Activated naive CD4-positive, alpha-beta T cell treated with anti-CD3 and anti-CD28 coated beads for 36 hours (primary cell): ENCODE measurements at regions of chr17 and their contacts with region 1.

Region 1: GRCh38 chr17:2253768-2254406 is 49.7 kb downstream of the SMG6 start:
- DNase-seq: peak; percentile 70
- H3K4me3 Mint-ChIP-seq: peak overlapping the region; percentile 43
- H3K27ac Mint-ChIP-seq: peak overlapping the region; percentile 91
- H3K4me1 Mint-ChIP-seq: peaks cover 65% of the 10 kb centered on the region
- H3K27me3 Mint-ChIP-seq: no peaks in the 10 kb centered on the region

Region 2: DNA sequence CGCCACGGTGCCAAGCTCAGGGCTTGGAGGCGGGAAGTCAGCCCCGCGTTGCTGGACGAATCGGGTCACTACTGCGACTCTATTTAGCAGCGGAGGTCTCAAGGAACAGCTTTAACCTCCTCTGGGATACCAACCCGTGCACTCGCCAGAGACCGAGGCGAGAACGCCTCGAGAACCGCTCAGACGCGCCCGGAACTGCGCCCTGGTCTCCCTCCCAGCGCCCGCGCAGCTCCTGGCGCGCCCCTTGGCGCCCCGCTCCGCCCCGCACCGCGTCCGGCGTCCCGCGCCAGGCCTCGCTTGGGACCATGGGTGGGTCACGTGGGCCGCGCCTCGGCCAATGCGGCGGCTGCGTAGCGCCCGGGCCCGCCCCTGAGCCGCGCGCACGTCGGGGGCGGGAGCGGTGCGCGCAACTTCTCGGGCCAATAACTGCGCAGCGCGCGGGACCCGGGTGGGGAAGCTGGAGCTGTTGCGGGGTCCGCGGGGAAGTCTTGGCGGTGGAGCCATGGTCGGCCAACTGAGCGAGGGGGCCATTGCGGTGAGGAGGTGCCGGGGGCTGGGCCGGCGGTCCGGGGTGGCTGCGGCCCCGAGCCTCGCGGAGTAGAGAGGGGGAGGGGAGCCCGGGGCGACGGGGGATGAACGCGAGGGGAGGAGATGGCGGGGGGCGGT is 424.2 kb before region 1 on chr17 and contains the starts of genes RPA1 and SMYD4:
- CTCF ChIA-PET with region 1: no interaction called
- intact Hi-C with region 1: loop called (anchors 5 kb)
- DNase-seq: peak; percentile 89
- H3K4me3 Mint-ChIP-seq: peak within 1 kb of the TSS; percentile 93
- H3K27ac Mint-ChIP-seq: peak within 1 kb of the TSS; percentile 85
- H3K4me1 Mint-ChIP-seq: peaks cover 61% of the 10 kb centered on the region
- H3K27me3 Mint-ChIP-seq: no peaks in the 10 kb centered on the region
- total RNA-seq, gene RPA1: 177 to 188 TPM
- total RNA-seq, gene SMYD4: 18.7 to 22.0 TPM

Region 3: GRCh38 chr17:2215616-2216364 is 38.1 kb before region 1 on chr17:
- CTCF ChIA-PET with region 1: no interaction called
- intact Hi-C with region 1: loop called (anchors 5 kb)
- DNase-seq: peak; percentile 86
- H3K4me3 Mint-ChIP-seq: peak overlapping the region; percentile 78
- H3K27ac Mint-ChIP-seq: peak overlapping the region; percentile 94
- H3K4me1 Mint-ChIP-seq: peaks cover 52% of the 10 kb centered on the region
- H3K27me3 Mint-ChIP-seq: no peaks in the 10 kb centered on the region

Region 4: DNA sequence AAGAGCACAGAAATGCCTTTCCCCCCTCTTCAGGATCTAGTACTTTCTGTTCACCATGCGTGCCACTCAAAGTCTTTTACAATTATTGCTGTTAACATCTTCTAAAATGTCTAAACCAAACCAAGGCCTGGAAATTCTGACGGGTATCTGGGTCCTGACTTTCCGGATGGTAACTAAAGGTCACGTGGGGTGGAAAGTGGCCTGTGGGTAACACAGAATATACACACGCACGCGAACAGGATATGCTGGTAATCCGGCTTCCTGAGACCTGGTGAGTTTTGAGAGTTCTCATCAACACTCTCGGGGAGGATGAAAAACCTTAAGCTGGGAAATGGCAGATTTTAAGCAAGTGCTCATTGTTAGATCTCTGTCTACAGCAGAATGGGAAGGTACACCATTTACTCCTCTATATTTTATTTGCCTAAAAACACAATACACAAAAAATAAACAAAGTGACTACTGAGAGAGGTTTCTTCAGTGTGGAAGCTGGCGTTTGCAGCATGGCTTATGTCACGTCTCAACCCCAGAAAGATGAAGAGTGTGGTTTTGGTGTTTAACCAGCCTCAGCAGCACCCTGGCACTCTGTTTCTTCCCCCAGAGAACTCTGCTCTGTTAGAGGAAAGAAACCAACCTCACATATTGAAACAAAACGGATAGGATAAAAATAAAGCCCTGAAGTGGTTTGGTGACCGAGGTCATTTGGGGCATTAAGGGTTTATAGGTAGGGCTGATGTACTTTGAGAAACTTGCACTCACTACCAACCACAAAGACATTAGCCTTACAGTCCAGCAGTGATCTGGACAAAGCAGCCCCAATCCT is 12.4 kb after region 1 on chr17:
- CTCF ChIA-PET with region 1: interaction called, 11 read pairs
- intact Hi-C with region 1: loop called (anchors 1 kb)
- DNase-seq: peak; percentile 94
- H3K4me3 Mint-ChIP-seq: peak overlapping the region; percentile 76
- H3K27ac Mint-ChIP-seq: peak overlapping the region; percentile 100
- H3K4me1 Mint-ChIP-seq: peaks cover 88% of the 10 kb centered on the region
- H3K27me3 Mint-ChIP-seq: no peaks in the 10 kb centered on the region

Region 5: GRCh38 chr17:2271985-2272702 is 18.3 kb after region 1 on chr17:
- CTCF ChIA-PET with region 1: interaction called, 11 read pairs
- intact Hi-C with region 1: loop called (anchors 2 kb)
- DNase-seq: peak; percentile 52
- H3K4me3 Mint-ChIP-seq: peak overlapping the region; percentile 32
- H3K27ac Mint-ChIP-seq: peak overlapping the region; percentile 94
- H3K4me1 Mint-ChIP-seq: peaks cover 68% of the 10 kb centered on the region
- H3K27me3 Mint-ChIP-seq: no peaks in the 10 kb centered on the region

Region 6: GRCh38 chr17:2282297-2282873 is 28.5 kb after region 1 on chr17:
- CTCF ChIA-PET with region 1: interaction called, 8 read pairs
- intact Hi-C with region 1: loop called (anchors 1 kb)
- DNase-seq: no peak
- H3K4me3 Mint-ChIP-seq: no peak overlapping the region
- H3K27ac Mint-ChIP-seq: peak overlapping the region; percentile 38
- H3K4me1 Mint-ChIP-seq: peaks cover 29% of the 10 kb centered on the region
- H3K27me3 Mint-ChIP-seq: no peaks in the 10 kb centered on the region

Region 7: DNA sequence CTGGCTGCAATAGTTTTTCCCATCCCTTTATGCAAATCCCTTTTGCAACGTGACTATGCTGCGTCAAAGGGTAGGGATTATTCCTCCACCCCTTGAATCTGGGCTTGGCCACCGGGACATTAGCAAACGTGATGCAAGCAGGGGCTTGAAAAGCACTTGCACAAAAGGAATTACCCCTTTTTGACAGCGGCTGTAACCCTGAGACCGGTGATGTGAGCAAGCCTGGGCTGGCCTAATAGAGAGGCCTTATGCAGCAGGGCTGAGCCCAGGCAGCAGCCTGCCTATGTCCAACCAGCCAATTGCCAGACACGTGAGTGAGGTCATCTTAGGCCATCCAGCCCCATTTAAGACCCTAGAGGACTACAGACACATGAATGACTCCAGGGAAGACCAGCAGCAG is 309.2 kb after region 1 on chr17:
- CTCF ChIA-PET with region 1: no interaction called
- intact Hi-C with region 1: no loop called
- DNase-seq: no peak
- H3K4me3 Mint-ChIP-seq: no peak overlapping the region
- H3K27ac Mint-ChIP-seq: no peak overlapping the region
- H3K4me1 Mint-ChIP-seq: peaks cover 9% of the 10 kb centered on the region
- H3K27me3 Mint-ChIP-seq: no peaks in the 10 kb centered on the region